HEK293 (cell line): ENCODE measurements at regions of chr20 and their contacts with region 1.

Region 1: DNA sequence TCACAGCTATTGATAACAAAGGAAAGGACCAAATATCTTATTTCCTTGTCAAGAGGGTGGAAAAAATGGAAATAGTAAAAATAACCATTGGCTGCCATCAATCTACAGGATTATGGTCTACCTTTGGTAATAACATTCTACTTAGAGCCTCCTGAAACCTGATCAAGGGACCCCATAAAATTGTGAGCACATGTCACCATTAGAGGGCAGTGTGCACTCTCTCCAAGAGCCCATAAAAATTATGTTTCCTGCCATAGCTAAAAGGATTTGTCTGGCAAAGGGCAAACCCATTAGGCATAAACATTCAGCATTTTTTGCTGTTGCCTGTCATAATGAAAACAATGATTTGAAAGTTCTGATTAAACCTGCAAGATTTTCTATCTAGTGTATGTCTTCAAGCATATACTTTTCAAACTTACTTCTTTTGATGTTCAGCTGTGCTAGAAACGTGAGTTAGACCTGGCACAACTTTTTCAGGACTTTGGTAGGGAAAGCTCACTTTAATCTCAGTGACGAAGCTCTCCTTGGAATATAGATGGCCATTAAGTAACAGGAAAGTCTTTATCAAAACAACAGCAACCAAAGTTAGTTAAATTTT is 120.7 kb upstream of the ZFP64 start:
- H3K4me3 ChIP-seq: no peak overlapping the region
- H3K27ac ChIP-seq: no peak overlapping the region
- H3K4me1 ChIP-seq: no peaks in the 10 kb centered on the region
- CTCF ChIP-seq: no peak

Region 2: DNA sequence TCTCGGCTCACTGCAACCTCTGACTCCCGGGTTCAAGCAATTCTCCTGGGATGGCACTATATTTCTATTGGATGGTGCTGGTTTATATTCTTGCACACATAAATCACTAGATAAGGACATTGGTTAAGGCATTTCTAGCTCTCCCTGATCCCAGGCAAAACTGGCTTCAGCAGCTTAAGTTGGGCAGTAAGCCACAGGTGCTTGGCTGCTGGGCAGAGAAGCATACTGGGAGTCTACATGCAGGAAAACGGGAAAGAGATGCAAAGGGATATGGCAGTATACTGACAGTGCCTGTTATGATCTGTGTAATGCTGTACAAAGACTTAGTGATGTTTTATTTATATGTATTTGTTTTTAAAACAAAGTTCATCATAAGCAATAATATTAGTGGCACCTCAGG is 87.3 kb before region 1 on chr20:
- CTCF ChIA-PET with region 1: no interaction called
- POLR2A ChIA-PET with region 1: no interaction called
- H3K4me3 ChIP-seq: no peak overlapping the region
- H3K27ac ChIP-seq: no peak overlapping the region
- H3K4me1 ChIP-seq: no peaks in the 10 kb centered on the region
- CTCF ChIP-seq: no peak

Region 3: GRCh38 chr20:52295556-52295955 is 16.7 kb before region 1 on chr20:
- CTCF ChIA-PET with region 1: interaction called, 19 read pairs
- POLR2A ChIA-PET with region 1: no interaction called
- H3K4me3 ChIP-seq: no peak overlapping the region
- H3K27ac ChIP-seq: no peak overlapping the region
- H3K4me1 ChIP-seq: no peaks in the 10 kb centered on the region
- CTCF ChIP-seq: no peak

Region 4: GRCh38 chr20:52379723-52380336 is 67.6 kb after region 1 on chr20:
- CTCF ChIA-PET with region 1: interaction called, 30 read pairs
- POLR2A ChIA-PET with region 1: no interaction called
- H3K4me3 ChIP-seq: no peak overlapping the region
- H3K27ac ChIP-seq: no peak overlapping the region
- H3K4me1 ChIP-seq: no peaks in the 10 kb centered on the region
- CTCF ChIP-seq: peak; percentile 28; the same call in 1 of the 2 replicates

Region 5: DNA sequence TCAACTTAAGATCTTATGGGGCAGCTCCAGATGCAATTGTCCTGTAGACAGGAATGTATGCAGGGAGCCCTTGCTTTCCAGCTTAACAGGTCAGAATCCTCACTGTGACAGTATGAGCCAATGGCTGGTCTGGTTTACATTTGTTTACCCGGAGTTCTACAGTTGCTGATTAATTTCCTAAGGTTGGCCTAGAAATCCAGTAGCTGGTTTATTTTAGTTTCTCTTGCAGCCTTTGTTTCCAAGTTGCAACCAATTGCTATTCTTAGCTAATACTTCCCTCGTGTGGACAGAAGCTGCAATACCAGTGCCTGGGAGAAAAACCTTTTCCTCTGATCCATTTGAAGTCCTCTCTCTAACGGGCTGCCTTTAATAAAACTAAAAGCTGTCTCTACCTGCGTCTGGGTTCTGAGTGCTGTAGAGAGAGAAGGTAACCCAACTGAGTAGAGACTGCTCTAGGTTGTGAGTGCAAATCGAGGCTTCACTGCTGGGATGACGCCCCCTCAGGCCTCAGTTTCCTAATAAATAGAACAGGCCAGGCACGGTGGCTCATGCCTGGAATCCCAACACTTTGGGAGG is 1235.5 kb after region 1 on chr20:
- CTCF ChIA-PET with region 1: interaction called, 27 read pairs
- POLR2A ChIA-PET with region 1: no interaction called
- H3K4me3 ChIP-seq: no peak overlapping the region
- H3K27ac ChIP-seq: no peak overlapping the region
- H3K4me1 ChIP-seq: no peaks in the 10 kb centered on the region
- CTCF ChIP-seq: peak; percentile 74